Calu3 (cell line): ENCODE measurements at regions of chr6 and their contacts with region 1.

Region 1: GRCh38 chr6:25278914-25279747 is at the start of gene CARMIL1:
- DNase-seq: peak; percentile 99
- H3K4me3 Mint-ChIP-seq: peak within 1 kb of the TSS; percentile 76
- H3K27ac Mint-ChIP-seq: peak within 1 kb of the TSS; percentile 90
- H3K4me1 Mint-ChIP-seq: peaks cover 61% of the 10 kb centered on the region
- H3K27me3 Mint-ChIP-seq: no peaks in the 10 kb centered on the region
- CTCF ChIP-seq: peak; percentile 97
- total RNA-seq, gene CARMIL1: 88.4 and 92.4 TPM in 2 replicates

Region 2: DNA sequence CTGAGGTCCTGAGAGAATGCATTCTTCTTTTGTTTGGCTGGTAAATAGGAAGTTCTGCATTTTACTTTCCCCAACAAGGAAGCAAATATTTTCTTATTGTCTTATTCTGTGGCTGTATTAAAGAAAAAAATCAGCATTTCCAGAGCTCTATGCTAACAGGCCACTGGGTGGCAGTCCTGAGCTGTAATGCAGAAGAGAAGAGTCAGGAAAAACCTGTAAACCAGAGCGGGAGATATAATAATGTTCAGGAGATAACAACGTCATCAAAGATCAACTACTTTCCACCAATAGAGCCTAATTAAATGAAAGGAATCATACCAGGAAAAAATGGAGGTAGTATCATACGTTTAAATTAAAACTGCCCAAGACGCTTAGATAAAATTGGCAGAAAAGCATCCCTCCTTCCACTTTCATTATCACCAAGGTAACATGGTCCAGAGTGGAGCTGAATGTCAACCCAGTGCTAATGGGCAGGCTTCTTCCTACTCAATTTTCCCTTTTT is 55.6 kb before region 1 on chr6:
- CTCF ChIA-PET with region 1: interaction called, 36 read pairs
- intact Hi-C with region 1: loop called (anchors 2 kb)
- DNase-seq: peak; percentile 92
- H3K4me3 Mint-ChIP-seq: peak overlapping the region; percentile 1
- H3K27ac Mint-ChIP-seq: no peak overlapping the region
- H3K4me1 Mint-ChIP-seq: peaks cover 29% of the 10 kb centered on the region
- H3K27me3 Mint-ChIP-seq: no peaks in the 10 kb centered on the region
- CTCF ChIP-seq: peak; percentile 99

Region 3: DNA sequence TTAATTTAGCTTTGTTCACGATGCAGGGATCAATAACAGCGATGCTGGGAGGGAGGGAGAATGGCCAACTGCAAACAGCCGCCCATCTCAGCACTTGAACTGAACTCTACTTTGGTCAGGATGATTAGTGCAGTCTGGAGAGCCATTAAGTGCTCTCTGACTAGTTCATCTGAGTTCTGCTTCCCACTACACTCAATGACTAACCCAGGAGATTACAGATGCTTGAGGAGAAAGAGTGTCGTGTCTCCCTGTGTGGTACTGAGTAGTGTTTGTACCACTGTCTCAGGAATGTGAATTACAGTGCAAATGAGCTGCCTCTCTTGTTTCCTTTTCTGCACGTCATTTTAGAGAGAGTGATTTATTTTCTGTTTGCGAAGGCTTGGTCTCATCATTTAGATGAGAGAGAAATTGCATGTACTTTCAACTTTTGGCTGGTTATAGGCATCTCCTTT is 23.6 kb after region 1 on chr6:
- CTCF ChIA-PET with region 1: interaction called, 29 read pairs
- intact Hi-C with region 1: no loop called
- DNase-seq: peak; percentile 35
- H3K4me3 Mint-ChIP-seq: peak overlapping the region; percentile 18
- H3K27ac Mint-ChIP-seq: peak overlapping the region; percentile 17
- H3K4me1 Mint-ChIP-seq: peaks cover 57% of the 10 kb centered on the region
- H3K27me3 Mint-ChIP-seq: no peaks in the 10 kb centered on the region
- CTCF ChIP-seq: no peak

Region 4: GRCh38 chr6:25359191-25359861 is 80.2 kb after region 1 on chr6:
- CTCF ChIA-PET with region 1: interaction called, 6 read pairs
- intact Hi-C with region 1: loop called (anchors 5 kb)
- DNase-seq: peak; percentile 31
- H3K4me3 Mint-ChIP-seq: peak overlapping the region; percentile 48
- H3K27ac Mint-ChIP-seq: peak overlapping the region; percentile 71
- H3K4me1 Mint-ChIP-seq: peaks cover 57% of the 10 kb centered on the region
- H3K27me3 Mint-ChIP-seq: no peaks in the 10 kb centered on the region
- CTCF ChIP-seq: no peak

Region 5: DNA sequence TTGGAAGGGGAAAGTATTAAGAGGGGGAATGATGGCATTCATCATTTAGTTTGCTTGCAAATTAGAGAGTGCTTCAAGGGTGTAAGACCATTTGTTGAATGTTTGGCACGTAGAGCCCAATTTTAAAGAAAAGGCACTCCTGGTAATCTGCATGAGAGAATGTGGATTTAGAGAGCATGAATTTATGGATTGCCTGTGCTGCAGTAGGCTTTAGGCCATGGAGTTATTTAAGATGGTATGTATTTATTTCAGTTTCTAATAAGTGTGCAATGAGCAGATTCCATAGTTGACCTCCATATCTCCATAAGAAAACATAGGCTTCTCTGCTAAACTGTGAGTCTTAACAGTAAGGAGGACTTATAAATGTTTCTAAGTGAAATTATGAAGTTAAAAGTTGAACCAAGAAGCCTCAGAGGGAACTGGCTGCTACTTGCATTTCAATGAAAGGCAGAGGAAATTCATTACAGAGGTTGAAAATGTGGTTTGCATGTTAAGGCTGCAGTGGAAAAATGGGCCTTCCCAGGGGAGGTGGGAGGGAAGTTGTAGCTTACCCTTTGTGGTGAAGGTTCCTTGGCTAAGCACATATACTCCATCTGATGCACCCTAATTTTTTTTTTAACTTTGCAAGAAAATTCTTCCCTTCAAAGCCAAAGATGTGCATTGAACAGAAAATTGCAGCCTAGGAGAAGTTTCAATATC is 134.2 kb after region 1 on chr6:
- CTCF ChIA-PET with region 1: no interaction called
- intact Hi-C with region 1: no loop called
- DNase-seq: no peak
- H3K4me3 Mint-ChIP-seq: no peak overlapping the region
- H3K27ac Mint-ChIP-seq: no peak overlapping the region
- H3K4me1 Mint-ChIP-seq: peaks cover 48% of the 10 kb centered on the region
- H3K27me3 Mint-ChIP-seq: no peaks in the 10 kb centered on the region
- CTCF ChIP-seq: no peak

Region 6: GRCh38 chr6:25458485-25458884 is 179.4 kb after region 1 on chr6:
- CTCF ChIA-PET with region 1: interaction called, 16 read pairs
- intact Hi-C with region 1: no loop called
- DNase-seq: peak; percentile 70
- H3K4me3 Mint-ChIP-seq: no peak overlapping the region
- H3K27ac Mint-ChIP-seq: peak overlapping the region; percentile 42
- H3K4me1 Mint-ChIP-seq: peaks cover 43% of the 10 kb centered on the region
- H3K27me3 Mint-ChIP-seq: no peaks in the 10 kb centered on the region
- CTCF ChIP-seq: no peak